B cell (primary cell): ENCODE measurements at regions of chr16 and their contacts with region 1.

Region 1: DNA sequence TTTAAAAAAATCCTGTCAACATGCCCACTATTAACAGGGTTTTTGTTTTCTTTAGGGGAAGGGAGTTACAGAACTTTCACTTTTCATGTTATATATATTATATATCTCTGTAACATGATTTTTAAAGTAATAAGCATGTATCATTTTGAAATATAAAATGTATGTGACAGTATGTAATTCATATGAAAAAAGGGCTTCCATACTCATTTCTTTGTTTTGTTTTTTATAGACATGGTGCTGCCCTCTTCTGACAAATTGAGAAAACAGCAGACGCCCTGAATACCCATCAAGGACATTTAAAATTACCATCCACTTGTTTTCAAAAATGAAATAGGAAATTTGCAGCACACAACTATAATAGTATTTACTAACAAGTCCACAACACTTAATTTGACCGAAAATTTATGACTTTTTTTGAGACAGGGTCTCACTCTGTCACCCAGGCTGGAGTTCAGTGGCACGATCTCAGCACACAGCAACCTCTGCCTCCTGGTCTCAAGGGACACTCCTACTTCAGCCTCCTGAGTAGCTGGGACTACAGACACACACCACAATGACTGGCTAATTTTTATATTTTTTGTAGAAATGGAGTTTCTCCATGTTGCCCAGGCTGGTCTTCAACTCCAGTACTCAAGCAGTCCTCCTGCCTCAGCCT is 30.4 kb downstream of the CFDP1 start:
- DNase-seq: peak; percentile 50
- ATAC-seq: no peak
- H3K4me3 ChIP-seq: no peak overlapping the region
- H3K4me3 Mint-ChIP-seq: no peak overlapping the region
- H3K27ac ChIP-seq: no peak overlapping the region
- H3K27ac Mint-ChIP-seq: no peak overlapping the region
- H3K4me1 ChIP-seq: no peaks in the 10 kb centered on the region
- H3K4me1 Mint-ChIP-seq: no peaks in the 10 kb centered on the region
- H3K27me3 ChIP-seq: no peaks in the 10 kb centered on the region
- H3K27me3 Mint-ChIP-seq: no peaks in the 10 kb centered on the region
- CTCF ChIP-seq: peak; percentile 81

Region 2: GRCh38 chr16:74991593-74992403 is 411.1 kb before region 1 on chr16:
- CTCF ChIA-PET with region 1: no interaction called
- POLR2A ChIA-PET with region 1: no interaction called
- intact Hi-C with region 1: no loop called
- DNase-seq: no peak
- ATAC-seq: no peak
- H3K4me3 ChIP-seq: no peak overlapping the region
- H3K4me3 Mint-ChIP-seq: no peak overlapping the region
- H3K27ac ChIP-seq: no peak overlapping the region
- H3K27ac Mint-ChIP-seq: no peak overlapping the region
- H3K4me1 ChIP-seq: no peaks in the 10 kb centered on the region
- H3K4me1 Mint-ChIP-seq: no peaks in the 10 kb centered on the region
- H3K27me3 ChIP-seq: peaks cover 0 to 17% (median 5%) of the 10 kb centered on the region in 4 experiments
- H3K27me3 Mint-ChIP-seq: peaks cover 16% of the 10 kb centered on the region
- CTCF ChIP-seq: no peak

Region 3: DNA sequence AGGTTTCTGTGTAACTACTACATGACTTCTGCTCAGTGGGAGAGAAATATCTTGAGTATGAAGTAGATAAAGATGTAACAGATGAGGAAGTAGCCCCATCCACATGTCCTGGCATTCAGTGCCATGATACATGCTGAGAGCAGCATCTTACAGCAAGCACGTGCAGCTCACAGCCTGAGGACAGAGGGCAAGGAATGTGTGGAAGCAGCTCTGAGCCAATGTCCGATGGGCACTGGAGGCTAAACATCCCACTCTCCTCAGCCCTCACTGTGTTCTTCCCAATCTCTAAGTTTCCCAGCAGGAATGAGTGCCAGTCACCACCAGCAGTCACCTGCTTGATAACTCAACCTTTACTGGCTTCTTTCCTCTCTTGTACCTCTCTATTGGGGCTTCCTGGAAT is 10.0 kb before region 1 on chr16:
- CTCF ChIA-PET with region 1: interaction called, 11 read pairs
- POLR2A ChIA-PET with region 1: no interaction called
- intact Hi-C with region 1: no loop called
- DNase-seq: no peak
- ATAC-seq: no peak
- H3K4me3 ChIP-seq: no peak overlapping the region
- H3K4me3 Mint-ChIP-seq: no peak overlapping the region
- H3K27ac ChIP-seq: no peak overlapping the region
- H3K27ac Mint-ChIP-seq: no peak overlapping the region
- H3K4me1 ChIP-seq: no peaks in the 10 kb centered on the region
- H3K4me1 Mint-ChIP-seq: no peaks in the 10 kb centered on the region
- H3K27me3 ChIP-seq: peaks cover 0 to 13% (median 5%) of the 10 kb centered on the region in 4 experiments
- H3K27me3 Mint-ChIP-seq: peaks cover 7% of the 10 kb centered on the region
- CTCF ChIP-seq: no peak

Region 4: GRCh38 chr16:75541236-75541635 is 138.3 kb after region 1 on chr16:
- CTCF ChIA-PET with region 1: no interaction called
- POLR2A ChIA-PET with region 1: no interaction called
- intact Hi-C with region 1: no loop called
- DNase-seq: no peak
- ATAC-seq: no peak
- H3K4me3 ChIP-seq: no peak overlapping the region
- H3K4me3 Mint-ChIP-seq: no peak overlapping the region
- H3K27ac ChIP-seq: no peak overlapping the region
- H3K27ac Mint-ChIP-seq: no peak overlapping the region
- H3K4me1 ChIP-seq: no peaks in the 10 kb centered on the region
- H3K4me1 Mint-ChIP-seq: no peaks in the 10 kb centered on the region
- H3K27me3 ChIP-seq: no peaks in the 10 kb centered on the region
- H3K27me3 Mint-ChIP-seq: no peaks in the 10 kb centered on the region
- CTCF ChIP-seq: no peak